T-cell (primary cell): ENCODE measurements at regions of chr11 and their contacts with region 1.

Region 1: DNA sequence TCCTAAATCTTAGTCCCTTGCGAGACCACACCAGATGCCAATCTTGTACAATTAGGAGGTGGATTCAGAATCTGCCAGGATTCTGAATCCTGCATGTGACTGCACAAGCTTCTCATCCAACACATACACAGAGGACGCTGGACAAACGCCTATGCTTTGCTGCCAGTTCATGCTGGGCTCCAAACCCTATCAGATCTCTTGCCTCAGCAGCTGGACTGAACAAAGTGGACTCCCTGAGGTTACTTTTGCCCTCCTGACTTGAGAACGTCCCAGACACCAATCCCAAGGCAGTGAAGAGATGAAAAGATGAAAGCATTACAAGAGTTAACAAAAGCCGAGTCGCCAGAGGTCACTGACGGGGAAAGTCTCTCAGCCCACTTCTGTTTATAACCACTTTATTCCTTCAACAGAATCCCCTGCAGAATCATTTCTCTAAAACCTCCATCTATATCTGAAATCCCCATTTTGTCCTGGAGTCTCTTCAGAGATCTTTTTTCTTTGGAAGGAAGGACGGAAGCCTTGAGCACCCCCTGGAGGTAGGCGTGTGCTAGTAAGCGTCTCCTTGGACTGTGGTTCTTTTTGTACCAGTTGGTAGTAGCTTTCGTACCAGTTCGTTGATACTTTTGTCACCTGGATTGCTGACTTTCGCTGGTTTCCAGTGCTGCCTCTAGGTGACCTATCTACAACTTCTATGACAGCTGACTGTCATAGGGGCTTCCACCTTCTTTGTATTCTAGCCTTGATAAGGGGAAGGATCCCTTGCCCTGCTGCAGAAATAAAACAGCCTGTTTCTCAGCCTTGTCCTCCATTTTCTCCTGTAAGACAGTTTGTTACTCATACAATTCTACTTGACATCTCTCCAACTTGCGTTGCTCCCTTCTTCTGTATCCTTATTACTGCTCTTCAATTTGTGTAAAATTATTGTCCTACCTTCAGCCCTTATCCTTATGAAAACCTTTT is 26.1 kb upstream of the EED start:
- DNase-seq: peak; percentile 4 to 80 (median 42)
- ATAC-seq: peak; percentile 83 to 94 (median 90)
- H3K4me3 ChIP-seq: peak overlapping the region in 1 of 2 donors; percentile 25
- H3K4me3 Mint-ChIP-seq: peak overlapping the region; percentile 56 to 75 (median 64)
- H3K27ac ChIP-seq: no peak overlapping the region
- H3K27ac Mint-ChIP-seq: no peak overlapping the region
- H3K4me1 ChIP-seq: peaks cover 0 to 11% of the 10 kb centered on the region in 2 experiments
- H3K4me1 Mint-ChIP-seq: peaks cover 13 to 17% (median 15%) of the 10 kb centered on the region in 3 donors
- H3K27me3 ChIP-seq: peaks cover 0 to 5% of the 10 kb centered on the region in 2 experiments
- H3K27me3 Mint-ChIP-seq: peaks cover 11 to 19% of the 10 kb centered on the region in 2 donors

Region 2: DNA sequence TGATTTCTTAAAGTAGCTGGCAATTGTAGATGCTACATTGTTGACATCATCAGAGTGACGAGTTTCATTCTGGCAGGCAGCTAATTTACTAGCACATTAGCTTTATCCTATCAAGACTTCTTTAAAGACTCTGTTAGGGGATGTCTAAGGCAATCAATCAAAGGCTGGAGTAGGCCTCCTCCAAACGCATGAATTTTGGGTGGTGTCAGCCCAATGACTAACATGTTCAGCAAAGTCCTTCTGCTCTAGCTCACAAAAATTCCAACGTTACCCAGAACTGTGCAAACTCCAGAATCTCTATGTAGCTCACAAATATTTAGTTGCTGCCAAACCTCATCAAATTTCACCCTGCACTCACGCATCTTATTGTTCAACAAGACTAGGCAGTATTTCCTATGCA is 986.8 kb before region 1 on chr11:
- CTCF ChIA-PET with region 1: no interaction called
- POLR2A ChIA-PET with region 1: no interaction called
- DNase-seq: no peak
- ATAC-seq: no peak
- H3K4me3 ChIP-seq: no peak overlapping the region
- H3K4me3 Mint-ChIP-seq: no peak overlapping the region
- H3K27ac ChIP-seq: no peak overlapping the region
- H3K27ac Mint-ChIP-seq: no peak overlapping the region
- H3K4me1 ChIP-seq: no peaks in the 10 kb centered on the region
- H3K4me1 Mint-ChIP-seq: no peaks in the 10 kb centered on the region
- H3K27me3 ChIP-seq: no peaks in the 10 kb centered on the region
- H3K27me3 Mint-ChIP-seq: no peaks in the 10 kb centered on the region

Region 3: DNA sequence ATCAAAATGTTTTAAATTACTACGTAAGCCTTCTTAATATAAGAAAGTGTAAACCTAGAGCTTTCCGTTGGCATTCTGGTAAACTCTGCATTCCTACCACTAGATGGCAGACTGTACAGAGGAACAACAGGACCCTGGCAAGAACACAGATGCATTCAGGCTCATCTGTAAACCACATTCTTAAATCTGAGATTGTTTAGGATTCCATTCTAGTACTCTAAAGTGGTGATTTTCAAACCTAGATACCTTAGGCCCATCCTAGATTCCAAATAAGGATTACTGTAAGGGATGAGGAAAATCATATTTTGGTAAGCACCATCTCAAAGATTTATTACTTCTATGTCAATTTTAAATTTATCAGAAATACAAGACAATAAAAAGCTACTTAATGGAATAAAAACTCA is 176.4 kb before region 1 on chr11:
- CTCF ChIA-PET with region 1: interaction called, 5 to 13 read pairs
- POLR2A ChIA-PET with region 1: no interaction called
- DNase-seq: peak in 28 of 35 experiments; percentile 10 to 87 (median 38)
- ATAC-seq: peak; percentile 87 to 95 (median 90)
- H3K4me3 ChIP-seq: no peak overlapping the region
- H3K4me3 Mint-ChIP-seq: no peak overlapping the region
- H3K27ac ChIP-seq: peak overlapping the region; percentile 25
- H3K27ac Mint-ChIP-seq: peak overlapping the region; percentile 55 to 78
- H3K4me1 ChIP-seq: peaks cover 20 to 34% of the 10 kb centered on the region in 2 experiments
- H3K4me1 Mint-ChIP-seq: peaks cover 63 to 69% (median 69%) of the 10 kb centered on the region in 3 donors
- H3K27me3 ChIP-seq: no peaks in the 10 kb centered on the region
- H3K27me3 Mint-ChIP-seq: no peaks in the 10 kb centered on the region

Region 4: GRCh38 chr11:86081455-86081854 is 136.9 kb before region 1 on chr11:
- CTCF ChIA-PET with region 1: no interaction called
- POLR2A ChIA-PET with region 1: no interaction called
- DNase-seq: no peak
- ATAC-seq: no peak
- H3K4me3 ChIP-seq: no peak overlapping the region
- H3K4me3 Mint-ChIP-seq: no peak overlapping the region
- H3K27ac ChIP-seq: no peak overlapping the region
- H3K27ac Mint-ChIP-seq: no peak overlapping the region
- H3K4me1 ChIP-seq: no peaks in the 10 kb centered on the region
- H3K4me1 Mint-ChIP-seq: no peaks in the 10 kb centered on the region
- H3K27me3 ChIP-seq: no peaks in the 10 kb centered on the region
- H3K27me3 Mint-ChIP-seq: no peaks in the 10 kb centered on the region

Region 5: GRCh38 chr11:86152006-86152862 is 66.2 kb before region 1 on chr11:
- CTCF ChIA-PET with region 1: no interaction called
- POLR2A ChIA-PET with region 1: no interaction called
- DNase-seq: no peak
- ATAC-seq: peak in 2 of 4 experiments; percentile 14 to 20
- H3K4me3 ChIP-seq: no peak overlapping the region
- H3K4me3 Mint-ChIP-seq: no peak overlapping the region
- H3K27ac ChIP-seq: no peak overlapping the region
- H3K27ac Mint-ChIP-seq: peak overlapping the region; percentile 44 to 53
- H3K4me1 ChIP-seq: peaks cover 0 to 16% of the 10 kb centered on the region in 2 experiments
- H3K4me1 Mint-ChIP-seq: peaks cover 16 to 23% (median 17%) of the 10 kb centered on the region in 3 donors
- H3K27me3 ChIP-seq: no peaks in the 10 kb centered on the region
- H3K27me3 Mint-ChIP-seq: no peaks in the 10 kb centered on the region

Region 6: GRCh38 chr11:86193297-86194095 is 24.9 kb before region 1 on chr11:
- CTCF ChIA-PET with region 1: interaction called, 3 to 21 read pairs
- POLR2A ChIA-PET with region 1: no interaction called
- DNase-seq: peak in 34 of 35 experiments; percentile 19 to 83 (median 46)
- ATAC-seq: peak; percentile 99 to 100 (median 99)
- H3K4me3 ChIP-seq: peak overlapping the region in 1 of 2 donors; percentile 36
- H3K4me3 Mint-ChIP-seq: peak overlapping the region; percentile 73 to 80 (median 79)
- H3K27ac ChIP-seq: no peak overlapping the region
- H3K27ac Mint-ChIP-seq: peak overlapping the region; percentile 82 to 87
- H3K4me1 ChIP-seq: peaks cover 6 to 10% of the 10 kb centered on the region in 2 experiments
- H3K4me1 Mint-ChIP-seq: peaks cover 13 to 16% (median 16%) of the 10 kb centered on the region in 3 donors
- H3K27me3 ChIP-seq: no peaks in the 10 kb centered on the region
- H3K27me3 Mint-ChIP-seq: no peaks in the 10 kb centered on the region

Region 7: DNA sequence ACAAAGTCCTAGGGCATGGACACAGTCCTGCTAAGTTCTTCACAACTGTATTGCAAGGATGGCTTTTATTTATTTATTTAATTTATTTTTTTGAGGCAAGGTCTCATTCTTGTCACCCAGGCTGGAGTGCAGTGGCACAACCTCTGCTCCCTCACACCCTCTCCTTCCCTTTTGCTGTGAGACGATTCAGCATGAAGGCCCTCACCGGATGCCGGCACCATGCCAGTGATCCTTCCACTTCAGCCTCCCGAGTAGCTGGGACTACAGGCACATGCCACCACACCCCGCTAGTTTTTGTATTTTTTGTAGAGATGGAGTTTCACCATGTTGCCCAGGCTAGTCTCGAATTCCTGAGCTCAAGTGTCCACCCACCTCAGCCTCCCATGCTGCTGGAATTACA is 44.0 kb after region 1 on chr11:
- CTCF ChIA-PET with region 1: interaction called in 1 of 2 experiments, 12 read pairs
- POLR2A ChIA-PET with region 1: no interaction called
- DNase-seq: no peak
- ATAC-seq: no peak
- H3K4me3 ChIP-seq: no peak overlapping the region
- H3K4me3 Mint-ChIP-seq: no peak overlapping the region
- H3K27ac ChIP-seq: no peak overlapping the region
- H3K27ac Mint-ChIP-seq: no peak overlapping the region
- H3K4me1 ChIP-seq: no peaks in the 10 kb centered on the region
- H3K4me1 Mint-ChIP-seq: peaks cover 0 to 6% (median 5%) of the 10 kb centered on the region in 3 donors
- H3K27me3 ChIP-seq: no peaks in the 10 kb centered on the region
- H3K27me3 Mint-ChIP-seq: no peaks in the 10 kb centered on the region

Region 8: GRCh38 chr11:86291466-86292262 is 73.3 kb after region 1 on chr11:
- CTCF ChIA-PET with region 1: no interaction called
- POLR2A ChIA-PET with region 1: interaction called in 1 of 2 experiments, 11 read pairs
- DNase-seq: peak in 34 of 35 experiments; percentile 4 to 76 (median 47)
- ATAC-seq: peak; percentile 26 to 40 (median 34)
- H3K4me3 ChIP-seq: no peak overlapping the region
- H3K4me3 Mint-ChIP-seq: no peak overlapping the region
- H3K27ac ChIP-seq: no peak overlapping the region
- H3K27ac Mint-ChIP-seq: peak overlapping the region; percentile 36 to 44
- H3K4me1 ChIP-seq: peaks cover 0 to 15% of the 10 kb centered on the region in 2 experiments
- H3K4me1 Mint-ChIP-seq: peaks cover 15 to 48% (median 30%) of the 10 kb centered on the region in 3 donors
- H3K27me3 ChIP-seq: no peaks in the 10 kb centered on the region
- H3K27me3 Mint-ChIP-seq: no peaks in the 10 kb centered on the region